Ascending aorta (tissue), 2 donors: ENCODE measurements at regions of chr3 and their contacts with region 1.

Region 1: GRCh38 chr3:125967138-125967537 is 1.8 kb upstream of the ROPN1B start:
- DNase-seq: no peak
- H3K4me3 ChIP-seq: no peak overlapping the region
- H3K27ac ChIP-seq: no peak overlapping the region
- H3K4me1 ChIP-seq: peaks cover 3% of the 10 kb centered on the region in 2 donors
- H3K27me3 ChIP-seq: no peaks in the 10 kb centered on the region
- CTCF ChIP-seq: no peak

Region 2: GRCh38 chr3:125990253-125990970 is 23.3 kb after region 1 on chr3:
- intact Hi-C with region 1: loop called (anchors 2 kb)
- DNase-seq: peak; percentile 66 to 96
- H3K4me3 ChIP-seq: peak overlapping the region; percentile 65 to 82
- H3K27ac ChIP-seq: peak overlapping the region; percentile 83 to 86
- H3K4me1 ChIP-seq: peaks cover 0 to 7% of the 10 kb centered on the region in 2 donors
- H3K27me3 ChIP-seq: no peaks in the 10 kb centered on the region
- CTCF ChIP-seq: no peak

Region 3: DNA sequence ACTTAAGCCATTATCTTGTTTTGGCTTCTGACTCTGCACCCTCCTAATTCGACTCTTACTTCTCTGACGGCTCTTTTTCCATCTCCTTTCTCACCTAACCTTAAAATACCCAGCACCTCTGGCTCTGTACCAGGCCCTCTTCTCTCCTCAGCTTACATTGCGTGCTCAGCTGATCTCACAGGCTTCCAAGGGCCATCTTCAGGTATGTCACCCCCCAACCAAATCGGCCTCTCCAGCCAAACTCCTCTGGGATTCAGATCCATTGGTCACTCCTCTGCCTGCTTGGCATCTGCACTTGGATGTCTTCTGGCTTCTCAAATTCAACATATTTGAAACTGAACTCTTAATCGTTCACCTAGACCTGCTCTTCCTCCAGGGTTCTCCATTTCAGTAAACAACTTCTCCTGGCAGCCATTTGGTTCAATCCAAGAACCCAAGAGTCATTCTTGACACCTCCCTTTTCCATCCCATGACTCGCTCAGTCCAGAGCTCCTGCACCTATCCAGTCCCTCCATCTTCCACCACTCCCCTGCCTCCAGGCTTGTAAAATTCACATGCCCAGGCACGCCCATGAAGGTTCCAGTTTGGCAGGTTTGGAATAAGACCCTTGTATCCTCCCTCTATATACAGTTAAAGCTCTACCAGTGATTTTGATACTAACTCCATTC is 152.0 kb after region 1 on chr3:
- intact Hi-C with region 1: no loop called
- DNase-seq: no peak
- H3K4me3 ChIP-seq: no peak overlapping the region
- H3K27ac ChIP-seq: no peak overlapping the region
- H3K4me1 ChIP-seq: no peaks in the 10 kb centered on the region
- H3K27me3 ChIP-seq: no peaks in the 10 kb centered on the region
- CTCF ChIP-seq: no peak